IMR-90 (cell line): ENCODE measurements at regions of chr10 and their contacts with region 1.

Region 1: DNA sequence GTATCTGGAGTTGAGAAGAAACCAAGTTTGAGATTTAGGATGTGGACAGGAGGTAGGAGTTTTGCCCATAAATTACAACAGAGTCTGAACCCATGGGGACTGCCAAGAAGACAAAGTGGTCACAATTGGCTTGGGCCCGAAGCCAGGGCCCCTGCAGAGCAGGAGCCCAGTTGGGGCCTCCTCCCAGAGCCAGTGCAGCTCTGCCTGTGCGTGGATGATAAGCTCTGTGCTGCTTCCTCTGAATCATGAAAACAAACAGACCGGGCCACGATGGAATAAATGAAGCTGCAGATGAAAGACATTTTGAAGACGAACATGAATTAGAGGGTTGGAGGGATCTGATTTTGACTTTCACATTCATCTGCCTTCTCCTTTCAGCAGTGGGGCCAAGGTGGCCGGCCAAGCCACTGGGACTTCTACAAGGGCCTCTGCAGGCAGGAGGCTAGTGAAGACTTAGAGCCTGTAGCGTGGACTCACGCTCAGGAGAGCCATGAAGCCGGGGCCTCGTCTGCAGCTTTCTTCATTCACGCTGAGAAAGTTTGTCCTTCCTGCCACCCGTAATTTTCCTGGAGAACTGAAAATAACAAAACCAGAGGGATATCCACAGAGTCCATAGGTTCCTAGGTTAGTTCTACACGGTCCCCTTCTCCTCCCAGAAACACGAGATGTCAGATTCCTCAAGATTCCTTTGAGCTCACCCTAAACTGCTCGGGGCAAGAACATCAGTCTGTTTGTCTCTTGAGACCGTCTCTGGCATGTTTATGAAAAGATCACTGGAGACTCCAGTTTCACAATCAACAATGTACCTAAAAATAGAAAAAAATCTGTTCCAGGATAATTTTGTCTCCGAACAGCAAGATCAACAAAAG is 156.7 kb upstream of the LYZL1 start:
- DNase-seq: peak; percentile 19
- ATAC-seq: peak; percentile 49; the same call in 1 of the 2 replicates
- H3K4me3 ChIP-seq: no peak overlapping the region
- H3K27ac ChIP-seq: no peak overlapping the region
- H3K4me1 ChIP-seq: peaks cover 15% of the 10 kb centered on the region
- H3K27me3 ChIP-seq: peaks cover 3% of the 10 kb centered on the region
- CTCF ChIP-seq: no peak
- POLR2A ChIP-seq: no peak
- RAD21 ChIP-seq: no peak

Region 2: GRCh38 chr10:28663576-28664313 is 468.4 kb before region 1 on chr10:
- CTCF ChIA-PET with region 1: interaction called, 10 read pairs
- POLR2A ChIA-PET with region 1: no interaction called
- dilution Hi-C with region 1: no loop called
- in situ Hi-C with region 1: no loop called
- intact Hi-C with region 1: loop called (anchors 1 kb)
- DNase-seq: peak; percentile 87
- ATAC-seq: peak; percentile 84
- H3K4me3 ChIP-seq: no peak overlapping the region
- H3K27ac ChIP-seq: no peak overlapping the region
- H3K4me1 ChIP-seq: peaks cover 6% of the 10 kb centered on the region
- H3K27me3 ChIP-seq: peaks cover 25% of the 10 kb centered on the region
- CTCF ChIP-seq: peak; percentile 99
- POLR2A ChIP-seq: peak; percentile 54; the same call in 1 of the 2 replicates
- RAD21 ChIP-seq: peak; percentile 100

Region 3: GRCh38 chr10:29344073-29344820 is 212.1 kb after region 1 on chr10:
- CTCF ChIA-PET with region 1: no interaction called
- POLR2A ChIA-PET with region 1: no interaction called
- dilution Hi-C with region 1: no loop called
- in situ Hi-C with region 1: no loop called
- intact Hi-C with region 1: no loop called
- DNase-seq: peak; percentile 32
- ATAC-seq: peak; percentile 44
- H3K4me3 ChIP-seq: no peak overlapping the region
- H3K27ac ChIP-seq: no peak overlapping the region
- H3K4me1 ChIP-seq: no peaks in the 10 kb centered on the region
- H3K27me3 ChIP-seq: peaks cover 44% of the 10 kb centered on the region
- CTCF ChIP-seq: no peak
- POLR2A ChIP-seq: no peak
- RAD21 ChIP-seq: no peak